Activated T-helper 1 cell treated with anti-CD3 and anti-CD28 coated beads, Interleukin-12 subunit alpha, Interleukin-12 subunit beta, Interleukin-2, Interleukin-4 antibody, amounts not matched to agents 30 ng/mL and 10 ng/mL and 1 ng/mL, durations not matched to agents 14 hours and 24 hours and 36 hours (primary cell): ENCODE measurements at regions of chr2 and their contacts with region 1.

Region 1: GRCh38 chr2:227324995-227325838 is at the start of gene MFF:
- DNase-seq: peak; percentile 91
- H3K4me3 Mint-ChIP-seq: peak within 1 kb of the TSS; percentile 94
- H3K27ac Mint-ChIP-seq: peak within 1 kb of the TSS; percentile 94
- H3K4me1 Mint-ChIP-seq: peaks cover 42% of the 10 kb centered on the region
- H3K27me3 Mint-ChIP-seq: peaks cover 14% of the 10 kb centered on the region
- total RNA-seq, gene MFF: 69.9 and 74.9 TPM in 2 replicates

Region 2: GRCh38 chr2:227335713-227336112 is 10.5 kb after region 1 on chr2:
- intact Hi-C with region 1: no loop called
- DNase-seq: no peak
- H3K4me3 Mint-ChIP-seq: no peak overlapping the region
- H3K27ac Mint-ChIP-seq: peak overlapping the region; percentile 36
- H3K4me1 Mint-ChIP-seq: peaks cover 12% of the 10 kb centered on the region
- H3K27me3 Mint-ChIP-seq: no peaks in the 10 kb centered on the region

Region 3: DNA sequence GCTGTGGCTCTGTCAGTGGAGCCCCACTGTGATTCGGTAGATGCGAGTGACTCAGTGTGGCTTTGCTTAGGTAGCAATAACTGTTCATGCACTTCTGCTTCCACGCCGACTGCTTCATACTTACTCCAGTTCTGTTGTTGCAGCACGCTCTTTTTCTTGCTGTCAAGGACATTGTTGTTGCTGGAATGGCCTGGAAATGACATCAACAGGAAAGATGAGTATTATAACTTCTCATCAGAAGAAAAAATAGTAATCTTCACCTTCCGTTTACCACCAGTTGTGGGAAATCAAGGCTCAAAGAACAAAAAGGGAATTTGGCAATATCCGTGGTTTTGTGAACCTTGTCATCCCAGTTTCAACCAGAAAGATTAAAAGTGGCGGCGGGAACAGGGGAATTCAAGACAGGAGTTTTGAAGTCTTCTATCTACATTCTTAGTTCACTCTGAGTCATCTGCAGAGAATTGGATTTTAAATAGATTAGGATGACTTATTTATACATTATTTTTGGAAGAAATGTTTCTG is 45.6 kb after region 1 on chr2:
- intact Hi-C with region 1: loop called (anchors 5 kb)
- DNase-seq: no peak
- H3K4me3 Mint-ChIP-seq: no peak overlapping the region
- H3K27ac Mint-ChIP-seq: no peak overlapping the region
- H3K4me1 Mint-ChIP-seq: peaks cover 12% of the 10 kb centered on the region
- H3K27me3 Mint-ChIP-seq: peaks cover 2% of the 10 kb centered on the region

Region 4: GRCh38 chr2:227406177-227407031 is 81.2 kb after region 1 on chr2:
- intact Hi-C with region 1: loop called (anchors 1 kb)
- DNase-seq: no peak
- H3K4me3 Mint-ChIP-seq: no peak overlapping the region
- H3K27ac Mint-ChIP-seq: peak overlapping the region; percentile 1
- H3K4me1 Mint-ChIP-seq: peaks cover 40% of the 10 kb centered on the region
- H3K27me3 Mint-ChIP-seq: peaks cover 2% of the 10 kb centered on the region

Region 5: GRCh38 chr2:227488045-227488444 is 162.8 kb after region 1 on chr2:
- intact Hi-C with region 1: loop called (anchors 5 kb)
- DNase-seq: no peak
- H3K4me3 Mint-ChIP-seq: peak overlapping the region; percentile 15
- H3K27ac Mint-ChIP-seq: peak overlapping the region; percentile 64
- H3K4me1 Mint-ChIP-seq: peaks cover 28% of the 10 kb centered on the region
- H3K27me3 Mint-ChIP-seq: no peaks in the 10 kb centered on the region

Region 6: DNA sequence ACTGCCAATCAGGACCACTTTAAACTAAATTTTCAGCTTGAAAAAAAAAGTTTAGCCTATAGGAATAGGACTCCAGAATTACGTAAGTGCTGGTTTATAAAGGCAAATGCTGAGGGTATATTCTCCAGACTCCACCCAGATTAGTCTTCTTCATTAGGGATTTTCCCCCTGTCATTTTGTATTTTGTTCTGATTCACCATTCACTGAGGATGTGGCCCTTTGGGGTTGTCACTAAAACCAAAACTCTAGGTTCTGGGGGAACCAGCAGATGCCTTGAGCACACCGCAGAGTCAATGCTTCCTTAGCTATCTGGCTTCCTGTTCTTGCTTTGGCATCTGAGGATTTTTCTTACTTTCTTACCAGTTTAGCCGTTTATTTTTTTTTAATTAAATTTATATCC is 302.6 kb after region 1 on chr2:
- intact Hi-C with region 1: no loop called
- DNase-seq: peak; percentile 3
- H3K4me3 Mint-ChIP-seq: no peak overlapping the region
- H3K27ac Mint-ChIP-seq: no peak overlapping the region
- H3K4me1 Mint-ChIP-seq: no peaks in the 10 kb centered on the region
- H3K27me3 Mint-ChIP-seq: peaks cover 16% of the 10 kb centered on the region